Thyroid gland (tissue), 4 donors: ENCODE measurements at regions of chr3 and their contacts with region 1.

Region 1: DNA sequence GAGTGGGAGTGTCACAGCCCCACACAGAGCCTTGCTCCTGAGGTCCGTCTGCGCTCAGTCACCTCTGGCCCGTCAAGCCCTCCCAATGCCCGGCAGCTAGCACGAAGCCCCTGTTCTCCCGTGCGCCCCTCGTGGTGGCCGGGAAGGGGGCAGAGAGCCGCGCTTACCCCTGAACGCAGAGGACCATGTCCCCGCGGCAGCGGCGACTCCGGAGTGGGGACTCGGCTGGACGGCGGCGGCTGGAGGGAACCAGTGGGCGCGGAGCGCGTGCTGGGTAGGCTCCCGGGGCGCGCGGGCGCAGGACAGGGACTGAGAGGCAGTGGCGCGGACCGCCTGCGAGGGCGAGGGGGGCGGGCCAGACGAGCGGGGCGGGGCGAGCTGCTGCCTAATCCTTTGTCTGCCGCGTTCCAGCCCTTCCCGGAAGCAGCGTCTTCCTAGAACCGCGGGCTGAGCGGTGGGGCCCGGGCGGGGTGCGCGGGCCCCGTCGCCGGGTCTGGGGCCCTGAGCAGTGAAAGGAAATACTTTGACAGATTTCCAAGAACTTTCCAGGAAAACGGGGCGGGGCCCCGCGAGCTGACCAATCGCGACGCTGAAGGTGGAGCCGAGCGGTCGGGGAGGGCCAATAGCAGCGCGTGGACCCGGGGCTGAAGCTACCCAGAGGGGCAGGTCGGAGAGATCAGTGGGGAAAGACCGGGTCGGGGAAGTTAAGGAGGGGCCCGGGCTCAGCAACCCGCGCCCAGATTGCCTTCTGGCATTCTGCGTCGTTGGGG is at the start of gene CISH:
- DNase-seq: peak; percentile 98 to 99
- H3K4me3 ChIP-seq: peak within 1 kb of the TSS; percentile 69 to 96 (median 82)
- H3K27ac ChIP-seq: peak within 1 kb of the TSS; percentile 99 to 100 (median 100)
- H3K4me1 ChIP-seq: peaks cover 41 to 59% of the 10 kb centered on the region in 2 donors
- H3K27me3 ChIP-seq: no peaks in the 10 kb centered on the region
- CTCF ChIP-seq: peak in 3 of 6 experiments; percentile 14 to 30 (median 28)
- POLR2A ChIP-seq: peak; percentile 86 to 95
- total RNA-seq, gene CISH: 31.0 to 78.1 (median 48.0) TPM

Region 2: DNA sequence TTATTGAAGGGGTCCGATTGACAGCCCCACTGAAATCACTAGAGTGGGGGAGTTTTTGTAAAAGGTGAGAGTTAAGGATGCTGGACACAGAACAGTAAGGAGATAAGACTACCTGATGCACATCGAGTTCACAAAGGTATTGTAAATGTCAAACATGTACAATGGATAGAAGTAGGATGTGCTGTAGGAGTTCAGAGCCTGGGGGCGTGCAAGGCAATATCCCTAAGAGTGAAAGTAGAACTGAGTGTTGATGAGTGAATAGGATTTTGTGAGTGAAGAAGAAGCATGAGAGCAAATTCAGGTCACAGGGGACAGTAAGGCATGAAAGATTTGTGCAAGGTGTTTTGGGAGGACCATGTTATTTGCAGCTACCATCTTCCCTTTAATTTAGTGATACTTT is 84.6 kb after region 1 on chr3:
- intact Hi-C with region 1: no loop called
- DNase-seq: no peak
- H3K4me3 ChIP-seq: no peak overlapping the region
- H3K27ac ChIP-seq: no peak overlapping the region
- H3K4me1 ChIP-seq: no peaks in the 10 kb centered on the region
- H3K27me3 ChIP-seq: no peaks in the 10 kb centered on the region
- CTCF ChIP-seq: no peak
- POLR2A ChIP-seq: no peak

Region 3: DNA sequence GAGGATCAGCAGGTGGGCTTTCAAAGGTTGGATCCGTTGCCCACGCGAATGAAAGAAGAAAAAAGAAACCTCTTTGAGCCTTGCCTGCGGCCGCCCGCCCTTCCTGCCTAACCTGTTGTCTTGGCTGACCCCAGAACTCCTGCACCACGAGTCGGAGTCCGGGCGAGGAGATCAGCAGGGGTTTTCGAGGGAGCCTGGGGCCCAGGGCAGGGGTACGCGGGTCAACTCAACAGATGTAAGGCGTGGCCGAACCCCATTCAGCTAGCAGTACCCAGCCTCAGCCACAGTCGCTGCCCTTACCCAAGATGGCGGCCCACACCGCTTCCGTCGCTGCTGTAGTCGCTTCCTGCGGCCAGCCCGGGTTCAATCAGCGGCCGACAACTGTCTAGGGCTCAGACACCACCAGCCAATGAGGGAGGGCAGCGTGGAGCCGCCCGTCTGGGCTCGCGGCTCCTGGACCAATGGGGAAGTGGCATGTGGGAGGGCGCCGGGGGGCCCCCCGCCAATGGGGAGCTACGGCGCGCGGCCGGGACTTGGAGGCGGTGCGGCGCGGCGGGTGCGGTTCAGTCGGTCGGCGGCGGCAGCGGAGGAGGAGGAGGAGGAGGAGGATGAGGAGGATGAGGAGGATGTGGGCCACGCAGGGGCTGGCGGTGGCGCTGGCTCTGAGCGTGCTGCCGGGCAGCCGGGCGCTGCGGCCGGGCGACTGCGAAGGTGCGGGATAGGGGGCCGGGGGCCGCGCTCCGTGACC is 773.3 kb after region 1 on chr3 and contains the start of gene MANF:
- intact Hi-C with region 1: loop called (anchors 5 kb)
- DNase-seq: peak; percentile 99
- H3K4me3 ChIP-seq: peak within 1 kb of the TSS; percentile 71 to 81 (median 71)
- H3K27ac ChIP-seq: peak within 1 kb of the TSS; percentile 87 to 96 (median 90)
- H3K4me1 ChIP-seq: peaks cover 29 to 51% of the 10 kb centered on the region in 2 donors
- H3K27me3 ChIP-seq: no peaks in the 10 kb centered on the region
- CTCF ChIP-seq: peak in 4 of 6 experiments; percentile 8 to 34 (median 23)
- POLR2A ChIP-seq: peak in 1 of 2 donors; percentile 94
- total RNA-seq, gene MANF: 79.7 to 312 (median 189) TPM